Posterior cingulate gyrus (tissue), 11 donors: ENCODE measurements at regions of chr6 and their contacts with region 1.

Region 1: DNA sequence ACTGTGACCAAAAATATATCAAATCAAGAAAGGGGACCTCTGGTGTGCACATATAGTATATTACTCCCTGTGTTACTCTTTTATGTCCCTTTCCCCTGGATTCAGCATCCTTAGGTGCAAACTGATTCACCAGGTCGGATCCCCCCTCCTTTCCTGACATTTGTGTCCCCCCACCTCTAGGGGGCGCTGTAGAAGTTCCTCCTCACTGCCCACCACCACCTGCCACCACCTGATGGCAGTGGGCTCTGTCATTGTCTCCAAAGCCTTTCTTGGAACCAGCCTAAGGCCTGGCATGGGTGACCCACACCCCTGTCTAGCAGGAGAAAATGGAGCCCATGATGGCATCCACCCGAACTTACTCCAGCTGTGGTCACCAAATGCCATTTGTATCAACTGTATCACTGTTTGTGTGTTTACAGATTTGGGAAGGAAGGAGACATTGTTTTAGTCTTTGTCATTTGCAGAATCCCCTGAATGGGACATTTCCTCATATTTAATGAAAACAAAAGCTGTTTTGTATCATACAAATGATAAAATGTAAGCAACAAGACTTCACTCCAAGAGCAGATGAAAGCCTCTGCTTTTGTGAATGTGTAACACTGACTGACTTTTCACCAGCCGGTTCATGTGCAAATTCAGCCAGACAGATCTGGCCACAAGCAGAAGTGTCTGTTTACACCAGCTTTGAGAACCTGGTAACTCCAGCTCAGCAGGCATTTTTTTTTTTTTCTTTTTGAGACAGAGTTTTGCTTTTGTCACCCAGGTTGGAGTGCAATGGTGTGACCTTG is 66.2 kb downstream of the ARMC2 start:
- DNase-seq: no peak

Region 2: GRCh38 chr6:108699290-108700041 is 215.0 kb before region 1 on chr6:
- intact Hi-C with region 1: no loop called
- DNase-seq: no peak

Region 3: DNA sequence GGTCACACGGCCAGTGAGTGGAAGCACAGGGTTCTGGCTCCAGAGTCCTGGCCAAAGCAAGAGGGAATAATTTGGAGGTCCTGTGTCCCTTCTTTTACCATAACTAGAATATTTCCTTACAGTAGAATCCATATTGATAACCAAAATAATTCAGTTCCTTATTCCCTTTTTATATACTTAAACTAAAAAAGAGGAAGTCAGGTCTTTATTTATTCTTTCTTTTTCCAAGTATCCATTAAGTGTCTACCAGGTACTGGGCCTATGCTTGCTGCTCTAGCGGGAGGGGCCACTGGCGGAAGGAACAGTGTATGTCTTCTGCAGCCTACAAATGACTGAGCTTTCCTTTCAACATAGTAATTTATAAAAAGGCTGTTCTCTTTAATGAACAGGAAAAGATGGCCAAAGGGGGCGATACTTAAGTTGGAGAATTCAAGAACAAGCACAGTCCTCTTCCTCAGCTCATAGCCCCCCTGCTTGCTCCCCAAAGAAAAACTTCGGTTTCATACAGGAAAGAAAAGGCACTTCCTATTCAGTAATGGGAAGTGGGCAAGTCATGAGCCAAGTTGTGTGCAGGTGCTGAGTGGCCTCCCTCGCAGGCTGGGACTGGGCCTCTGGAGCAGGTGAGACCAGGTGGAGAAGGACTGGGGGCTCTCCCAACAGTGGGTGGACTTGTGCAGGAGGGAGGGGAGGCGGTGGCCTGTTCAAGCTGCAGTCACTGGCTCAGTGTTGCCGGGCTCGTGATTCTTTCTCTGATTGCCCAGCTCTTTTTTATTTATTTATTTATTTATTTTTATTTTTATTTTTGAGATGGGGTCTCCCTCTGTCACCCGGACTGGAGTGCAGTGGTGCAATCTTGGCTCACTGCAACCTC is 44.7 kb after region 1 on chr6:
- intact Hi-C with region 1: loop called (anchors 5 kb)
- DNase-seq: no peak